Activated B cell treated with CpG ODN at 0.5 μM for 24 hours (primary cell): ENCODE measurements at regions of chr3 and their contacts with region 1.

Region 1: GRCh38 chr3:13091898-13092611 is 18.8 kb upstream of the IQSEC1 start:
- DNase-seq: peak; percentile 80
- ATAC-seq: peak; percentile 49
- H3K4me3 Mint-ChIP-seq: no peak overlapping the region
- H3K27ac Mint-ChIP-seq: peak overlapping the region; percentile 35
- H3K4me1 Mint-ChIP-seq: peaks cover 71% of the 10 kb centered on the region
- H3K27me3 Mint-ChIP-seq: peaks cover 10% of the 10 kb centered on the region
- CTCF ChIP-seq: peak; percentile 33

Region 2: GRCh38 chr3:11099306-11099705 is 1992.7 kb before region 1 on chr3:
- CTCF ChIA-PET with region 1: no interaction called
- POLR2A ChIA-PET with region 1: no interaction called
- intact Hi-C with region 1: no loop called
- DNase-seq: no peak
- ATAC-seq: no peak
- H3K4me3 Mint-ChIP-seq: no peak overlapping the region
- H3K27ac Mint-ChIP-seq: no peak overlapping the region
- H3K4me1 Mint-ChIP-seq: peaks cover 5% of the 10 kb centered on the region
- H3K27me3 Mint-ChIP-seq: no peaks in the 10 kb centered on the region
- CTCF ChIP-seq: no peak

Region 3: GRCh38 chr3:13045904-13046568 is 46.0 kb before region 1 on chr3:
- CTCF ChIA-PET with region 1: interaction called, 6 read pairs
- POLR2A ChIA-PET with region 1: interaction called, 10 read pairs
- intact Hi-C with region 1: loop called (anchors 1 kb)
- DNase-seq: peak; percentile 61
- ATAC-seq: peak; percentile 90
- H3K4me3 Mint-ChIP-seq: peak overlapping the region; percentile 62
- H3K27ac Mint-ChIP-seq: peak overlapping the region; percentile 90
- H3K4me1 Mint-ChIP-seq: peaks cover 74% of the 10 kb centered on the region
- H3K27me3 Mint-ChIP-seq: no peaks in the 10 kb centered on the region
- CTCF ChIP-seq: no peak

Region 4: GRCh38 chr3:13073326-13074005 is 18.6 kb before region 1 on chr3 and contains the start of gene IQSEC1:
- CTCF ChIA-PET with region 1: interaction called, 4 read pairs
- POLR2A ChIA-PET with region 1: interaction called, 15 read pairs
- intact Hi-C with region 1: loop called (anchors 1 kb)
- DNase-seq: peak; percentile 76
- ATAC-seq: peak; percentile 66
- H3K4me3 Mint-ChIP-seq: peak within 1 kb of the TSS; percentile 86
- H3K27ac Mint-ChIP-seq: peak within 1 kb of the TSS; percentile 85
- H3K4me1 Mint-ChIP-seq: peaks cover 62% of the 10 kb centered on the region
- H3K27me3 Mint-ChIP-seq: no peaks in the 10 kb centered on the region
- CTCF ChIP-seq: no peak
- total RNA-seq, gene IQSEC1: 260 and 296 TPM in 2 replicates

Region 5: DNA sequence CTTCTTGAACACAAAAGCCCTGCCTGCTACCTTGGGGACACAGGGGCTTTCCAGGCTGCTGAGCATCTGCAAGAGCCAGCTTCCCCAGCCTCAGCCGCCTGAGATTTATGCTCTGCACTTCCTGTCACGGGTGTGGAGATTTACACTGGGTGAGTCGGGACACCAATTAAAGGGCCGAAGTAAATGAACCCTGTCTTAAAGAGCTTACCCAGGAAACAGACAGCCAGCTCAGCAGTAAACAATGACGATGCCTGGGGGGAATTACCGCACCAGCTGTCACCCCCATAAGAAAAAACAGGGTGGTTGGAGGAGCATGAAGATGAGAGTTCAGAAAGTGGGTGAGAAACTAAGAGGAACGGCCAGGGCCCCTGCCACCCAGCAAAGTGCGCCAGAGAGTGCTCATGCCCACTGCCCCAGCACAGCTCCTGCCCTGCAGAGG is 18.6 kb after region 1 on chr3:
- CTCF ChIA-PET with region 1: interaction called, 20 read pairs
- POLR2A ChIA-PET with region 1: interaction called, 17 read pairs
- intact Hi-C with region 1: loop called (anchors 1 kb)
- DNase-seq: peak; percentile 62
- ATAC-seq: peak; percentile 90
- H3K4me3 Mint-ChIP-seq: peak overlapping the region; percentile 73
- H3K27ac Mint-ChIP-seq: peak overlapping the region; percentile 96
- H3K4me1 Mint-ChIP-seq: peaks cover 60% of the 10 kb centered on the region
- H3K27me3 Mint-ChIP-seq: no peaks in the 10 kb centered on the region
- CTCF ChIP-seq: no peak

Region 6: GRCh38 chr3:13229273-13229949 is 137.4 kb after region 1 on chr3:
- CTCF ChIA-PET with region 1: interaction called, 3 read pairs
- POLR2A ChIA-PET with region 1: no interaction called
- intact Hi-C with region 1: loop called (anchors 5 kb)
- DNase-seq: no peak
- ATAC-seq: no peak
- H3K4me3 Mint-ChIP-seq: no peak overlapping the region
- H3K27ac Mint-ChIP-seq: no peak overlapping the region
- H3K4me1 Mint-ChIP-seq: peaks cover 14% of the 10 kb centered on the region
- H3K27me3 Mint-ChIP-seq: peaks cover 2% of the 10 kb centered on the region
- CTCF ChIP-seq: no peak

Region 7: GRCh38 chr3:13332158-13332557 is 240.1 kb after region 1 on chr3:
- CTCF ChIA-PET with region 1: interaction called, 16 read pairs
- POLR2A ChIA-PET with region 1: interaction called, 8 read pairs
- intact Hi-C with region 1: loop called (anchors 1 kb)
- DNase-seq: peak; percentile 48
- ATAC-seq: peak; percentile 91
- H3K4me3 Mint-ChIP-seq: peak overlapping the region; percentile 56
- H3K27ac Mint-ChIP-seq: peak overlapping the region; percentile 88
- H3K4me1 Mint-ChIP-seq: peaks cover 39% of the 10 kb centered on the region
- H3K27me3 Mint-ChIP-seq: no peaks in the 10 kb centered on the region
- CTCF ChIP-seq: no peak

Region 8: DNA sequence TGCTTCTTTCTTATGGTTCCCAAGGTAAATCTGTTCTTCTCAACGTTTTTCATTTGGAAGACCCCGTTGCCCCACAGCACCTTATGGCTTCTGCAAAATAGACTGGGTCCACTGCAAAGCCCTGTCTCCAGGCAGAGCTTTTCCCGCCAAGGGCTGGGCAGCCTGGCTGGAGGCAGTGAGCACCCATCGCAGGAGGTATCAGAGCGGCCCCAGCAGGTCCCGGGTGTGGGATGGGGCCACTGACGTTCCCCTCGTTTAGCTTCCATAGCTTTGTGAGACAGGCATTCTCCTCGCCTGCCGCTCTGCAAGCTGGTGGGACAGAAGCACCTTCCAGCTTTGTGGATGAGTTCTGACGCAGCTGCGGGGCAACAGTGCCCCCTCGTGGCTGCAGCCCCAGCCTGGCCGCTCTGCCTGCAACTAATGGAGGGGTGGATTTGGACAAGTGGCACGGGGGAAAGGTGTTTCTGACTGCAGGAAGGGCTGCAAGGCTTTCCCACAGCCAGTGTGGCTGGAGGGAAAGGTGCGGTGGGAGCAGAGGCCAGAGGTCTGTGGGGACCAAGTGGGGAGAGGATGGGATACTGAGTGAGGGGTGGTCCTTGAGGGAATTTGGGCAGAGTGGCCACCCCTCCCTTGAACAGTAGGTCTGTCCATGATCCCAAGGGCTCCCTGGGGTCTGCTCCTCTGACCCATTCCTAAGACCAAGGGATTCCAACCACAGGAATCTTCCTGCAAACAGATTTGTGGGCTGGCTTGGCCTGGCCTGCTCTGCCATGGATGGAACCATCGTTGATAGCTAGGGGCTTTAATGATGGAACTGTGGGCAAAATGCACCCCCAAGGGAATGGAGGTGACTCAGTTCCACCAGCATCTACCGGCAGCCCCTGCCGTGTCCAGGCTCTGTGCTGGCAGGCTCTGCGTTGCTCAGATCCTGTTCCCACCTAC is 556.3 kb after region 1 on chr3:
- CTCF ChIA-PET with region 1: interaction called, 18 read pairs
- POLR2A ChIA-PET with region 1: interaction called, 3 read pairs
- intact Hi-C with region 1: loop called (anchors 1 kb)
- DNase-seq: peak; percentile 77
- ATAC-seq: peak; percentile 63
- H3K4me3 Mint-ChIP-seq: no peak overlapping the region
- H3K27ac Mint-ChIP-seq: no peak overlapping the region
- H3K4me1 Mint-ChIP-seq: peaks cover 18% of the 10 kb centered on the region
- H3K27me3 Mint-ChIP-seq: peaks cover 46% of the 10 kb centered on the region
- CTCF ChIP-seq: peak; percentile 98